OCI-LY7 (cell line): ENCODE measurements at regions of chr2 and their contacts with region 1.

Region 1: GRCh38 chr2:19901442-19902215 is at the start of gene TTC32:
- DNase-seq: peak; percentile 94
- H3K4me3 ChIP-seq: peak within 1 kb of the TSS; percentile 89
- H3K27ac ChIP-seq: peak within 1 kb of the TSS; percentile 82
- H3K4me1 ChIP-seq: peaks cover 25% of the 10 kb centered on the region
- CTCF ChIP-seq: no peak
- total RNA-seq, gene TTC32: 16.3 and 21.1 TPM in 2 replicates

Region 2: DNA sequence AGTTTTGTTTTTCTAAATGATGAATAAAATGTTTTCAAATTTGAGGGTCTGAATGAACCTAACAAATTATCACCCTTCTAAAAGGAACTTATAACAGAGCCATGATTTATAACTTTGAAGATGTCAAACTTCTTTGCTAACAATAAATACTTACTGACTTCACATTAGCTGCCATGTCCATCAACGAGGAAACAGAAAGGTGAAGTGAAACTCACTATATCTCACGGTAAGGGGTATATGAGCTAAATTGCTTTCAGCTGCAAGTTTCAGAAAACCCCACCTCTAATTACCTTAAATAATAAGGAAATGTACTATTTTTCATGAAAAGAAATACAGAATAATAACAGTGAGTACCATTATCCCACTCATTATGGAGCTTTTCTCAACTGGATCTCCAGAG is 961.4 kb before region 1 on chr2:
- CTCF ChIA-PET with region 1: no interaction called
- POLR2A ChIA-PET with region 1: no interaction called
- intact Hi-C with region 1: loop called (anchors 2 kb)
- DNase-seq: peak; percentile 82
- H3K4me3 ChIP-seq: peak overlapping the region; percentile 42
- H3K27ac ChIP-seq: peak overlapping the region; percentile 77
- H3K4me1 ChIP-seq: peaks cover 33% of the 10 kb centered on the region
- CTCF ChIP-seq: no peak

Region 3: DNA sequence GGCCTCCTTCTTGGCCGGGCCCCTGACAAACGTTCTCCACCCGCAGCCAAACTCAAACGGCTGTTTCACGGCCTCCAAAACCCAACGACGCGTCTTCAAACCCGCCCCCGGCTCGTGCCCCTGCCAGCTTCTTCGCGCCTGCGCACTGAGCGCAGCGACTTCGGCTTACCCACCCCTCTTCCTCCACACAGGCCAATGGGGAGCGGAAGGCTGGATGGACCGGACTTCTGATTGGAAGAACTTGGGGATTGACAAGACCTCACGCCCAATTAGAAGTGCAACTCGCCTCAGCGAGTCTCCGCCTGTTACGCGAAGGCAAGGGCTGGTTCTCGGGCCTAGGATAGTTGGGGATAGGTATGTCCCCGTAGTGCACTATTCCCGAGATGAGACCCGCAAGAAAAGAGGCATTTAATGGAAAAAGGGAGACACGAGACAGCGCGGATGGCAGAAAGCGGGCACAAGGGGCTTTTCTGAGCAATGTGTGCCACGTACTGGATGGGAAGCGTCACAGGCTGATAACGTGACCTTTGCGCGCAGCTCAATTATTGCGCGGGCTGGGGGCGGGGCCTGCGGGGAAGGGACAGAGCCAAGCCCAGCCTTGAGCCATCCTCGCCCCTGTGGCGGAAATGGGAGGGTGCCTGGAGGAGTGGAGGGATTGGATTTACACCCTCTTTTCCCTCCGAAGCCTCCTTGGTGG is 150.1 kb after region 1 on chr2 and contains the start of gene LAPTM4A:
- CTCF ChIA-PET with region 1: no interaction called
- POLR2A ChIA-PET with region 1: no interaction called
- intact Hi-C with region 1: loop called (anchors 1 kb)
- DNase-seq: peak; percentile 99
- H3K4me3 ChIP-seq: peak within 1 kb of the TSS; percentile 89
- H3K27ac ChIP-seq: peak within 1 kb of the TSS; percentile 74
- H3K4me1 ChIP-seq: peaks cover 27% of the 10 kb centered on the region
- CTCF ChIP-seq: no peak
- total RNA-seq, gene LAPTM4A: 6.5 and 8.4 TPM in 2 replicates

Region 4: DNA sequence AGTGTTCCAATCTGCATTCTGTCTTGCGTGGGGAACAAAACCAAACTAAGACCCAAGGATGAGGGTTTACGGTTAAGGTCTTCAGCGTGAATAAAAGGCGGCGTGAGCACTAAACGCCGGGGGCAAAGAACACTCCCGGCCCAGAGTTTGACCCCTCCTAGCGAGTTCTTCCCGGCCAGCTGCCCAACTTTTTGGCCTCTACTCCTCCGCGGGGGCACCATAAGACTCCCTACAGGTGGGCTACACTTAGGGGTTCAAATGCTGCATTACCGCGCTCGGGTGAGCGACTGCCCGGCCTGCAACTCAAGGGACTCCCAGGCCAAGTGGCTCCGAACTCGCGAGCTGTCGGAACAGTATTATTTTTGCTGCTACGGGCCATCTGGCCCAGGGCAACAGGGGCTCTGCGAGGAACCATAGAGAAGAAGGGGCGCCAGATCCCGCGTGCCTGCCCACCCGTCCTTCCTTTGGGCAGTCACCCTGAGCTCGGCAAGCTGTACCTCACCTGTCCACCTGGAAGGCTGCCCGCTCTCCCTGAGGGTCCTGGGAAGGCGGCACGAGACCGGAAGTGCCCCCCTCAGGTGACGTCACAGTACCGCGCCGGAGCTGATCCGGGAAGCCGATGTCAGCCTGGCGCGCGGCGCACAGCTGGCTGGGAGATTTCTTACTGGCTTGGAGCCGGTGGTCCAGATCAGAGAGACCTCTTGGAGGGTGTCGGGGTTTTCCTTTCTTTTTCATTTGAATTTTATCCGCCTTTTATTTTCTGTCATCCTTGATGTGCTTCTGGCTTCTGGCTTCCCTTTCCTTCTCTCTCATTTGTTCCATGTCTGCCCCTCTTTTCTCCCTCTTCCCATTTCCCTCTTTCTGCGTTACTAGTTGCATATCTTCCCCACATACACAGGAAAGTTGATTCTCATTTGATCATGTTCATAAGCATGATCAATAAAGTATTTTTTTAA is 921.2 kb after region 1 on chr2 and contains the start of gene LDAH:
- CTCF ChIA-PET with region 1: no interaction called
- POLR2A ChIA-PET with region 1: no interaction called
- intact Hi-C with region 1: loop called (anchors 10 kb)
- DNase-seq: peak; percentile 89
- H3K4me3 ChIP-seq: peak within 1 kb of the TSS; percentile 97
- H3K27ac ChIP-seq: peak within 1 kb of the TSS; percentile 68
- H3K4me1 ChIP-seq: no peaks in the 10 kb centered on the region
- CTCF ChIP-seq: no peak
- total RNA-seq, gene LDAH: 14.5 and 21.7 TPM in 2 replicates